CD4-positive, alpha-beta memory T cell (primary cell): ENCODE measurements at regions of chr3 and their contacts with region 1.

Region 1: GRCh38 chr3:187066228-187066995 is 72.9 kb downstream of the RPL39L start:
- DNase-seq: peak; percentile 38 to 76 (median 56)
- H3K4me3 ChIP-seq: no peak overlapping the region
- H3K4me3 Mint-ChIP-seq: no peak overlapping the region
- H3K27ac ChIP-seq: no peak overlapping the region
- H3K27ac Mint-ChIP-seq: peak overlapping the region; percentile 44 to 94 (median 85)
- H3K4me1 ChIP-seq: peaks cover 46% of the 10 kb centered on the region
- H3K4me1 Mint-ChIP-seq: peaks cover 48 to 61% (median 54%) of the 10 kb centered on the region in 4 donors
- H3K27me3 ChIP-seq: no peaks in the 10 kb centered on the region
- H3K27me3 Mint-ChIP-seq: no peaks in the 10 kb centered on the region

Region 2: DNA sequence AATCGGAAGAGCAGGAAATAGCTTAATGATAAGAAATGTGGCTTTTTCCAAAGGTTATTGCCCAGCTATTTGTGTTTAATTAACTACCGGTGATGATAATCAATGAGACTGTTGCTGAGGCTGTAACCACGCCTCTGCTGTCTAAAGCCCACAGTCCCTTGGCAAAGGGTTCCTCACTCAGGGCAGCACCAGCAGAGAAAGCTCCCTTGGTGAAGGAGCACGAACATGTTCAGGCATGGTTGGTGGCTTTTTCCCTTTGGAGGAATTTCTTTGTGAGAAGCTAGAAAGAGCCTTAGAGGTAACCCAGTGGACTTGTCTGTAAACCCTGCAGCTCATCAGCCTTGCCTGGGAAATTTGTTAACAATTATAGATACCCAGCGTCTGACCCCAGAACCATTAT is 143.6 kb before region 1 on chr3:
- CTCF ChIA-PET with region 1: no interaction called
- POLR2A ChIA-PET with region 1: no interaction called
- intact Hi-C with region 1: no loop called
- DNase-seq: no peak
- H3K4me3 ChIP-seq: no peak overlapping the region
- H3K4me3 Mint-ChIP-seq: no peak overlapping the region
- H3K27ac ChIP-seq: no peak overlapping the region
- H3K27ac Mint-ChIP-seq: no peak overlapping the region
- H3K4me1 ChIP-seq: peaks cover 2% of the 10 kb centered on the region
- H3K4me1 Mint-ChIP-seq: peaks cover 0 to 12% (median 5%) of the 10 kb centered on the region in 4 donors
- H3K27me3 ChIP-seq: no peaks in the 10 kb centered on the region
- H3K27me3 Mint-ChIP-seq: no peaks in the 10 kb centered on the region

Region 3: GRCh38 chr3:187000711-187001151 is 65.7 kb before region 1 on chr3:
- CTCF ChIA-PET with region 1: interaction called, 5 read pairs
- POLR2A ChIA-PET with region 1: no interaction called
- intact Hi-C with region 1: loop called (anchors 10 kb)
- DNase-seq: no peak
- H3K4me3 ChIP-seq: no peak overlapping the region
- H3K4me3 Mint-ChIP-seq: peak overlapping the region in 6 of 8 donors; percentile 5 to 66 (median 56)
- H3K27ac ChIP-seq: no peak overlapping the region
- H3K27ac Mint-ChIP-seq: peak overlapping the region; percentile 21 to 89 (median 80)
- H3K4me1 ChIP-seq: peaks cover 71% of the 10 kb centered on the region
- H3K4me1 Mint-ChIP-seq: peaks cover 54 to 81% (median 70%) of the 10 kb centered on the region in 4 donors
- H3K27me3 ChIP-seq: no peaks in the 10 kb centered on the region
- H3K27me3 Mint-ChIP-seq: no peaks in the 10 kb centered on the region

Region 4: GRCh38 chr3:187031934-187032333 is 34.5 kb before region 1 on chr3:
- CTCF ChIA-PET with region 1: interaction called, 12 read pairs
- POLR2A ChIA-PET with region 1: interaction called, 39 read pairs
- intact Hi-C with region 1: loop called (anchors 2 kb)
- DNase-seq: no peak
- H3K4me3 ChIP-seq: no peak overlapping the region
- H3K4me3 Mint-ChIP-seq: peak overlapping the region; percentile 37 to 97 (median 74)
- H3K27ac ChIP-seq: peak overlapping the region; percentile 31
- H3K27ac Mint-ChIP-seq: peak overlapping the region; percentile 71 to 95 (median 85)
- H3K4me1 ChIP-seq: peaks cover 69% of the 10 kb centered on the region
- H3K4me1 Mint-ChIP-seq: peaks cover 56 to 85% (median 69%) of the 10 kb centered on the region in 4 donors
- H3K27me3 ChIP-seq: no peaks in the 10 kb centered on the region
- H3K27me3 Mint-ChIP-seq: no peaks in the 10 kb centered on the region

Region 5: GRCh38 chr3:187049462-187050101 is 16.8 kb before region 1 on chr3:
- CTCF ChIA-PET with region 1: interaction called, 4 read pairs
- POLR2A ChIA-PET with region 1: no interaction called
- intact Hi-C with region 1: loop called (anchors 2 kb)
- DNase-seq: no peak
- H3K4me3 ChIP-seq: no peak overlapping the region
- H3K4me3 Mint-ChIP-seq: peak overlapping the region in 4 of 8 donors; percentile 3 to 62 (median 58)
- H3K27ac ChIP-seq: no peak overlapping the region
- H3K27ac Mint-ChIP-seq: peak overlapping the region; percentile 12 to 83 (median 71)
- H3K4me1 ChIP-seq: peaks cover 58% of the 10 kb centered on the region
- H3K4me1 Mint-ChIP-seq: peaks cover 47 to 88% (median 62%) of the 10 kb centered on the region in 4 donors
- H3K27me3 ChIP-seq: no peaks in the 10 kb centered on the region
- H3K27me3 Mint-ChIP-seq: no peaks in the 10 kb centered on the region